Right cardiac atrium (tissue), 5 donors: ENCODE measurements at regions of chr3 and their contacts with region 1.

Region 1: GRCh38 chr3:113136071-113136470 is 75.3 kb upstream of the BOC start:
- DNase-seq: no peak
- ATAC-seq: no peak
- H3K4me3 ChIP-seq: no peak overlapping the region
- H3K27ac ChIP-seq: no peak overlapping the region
- H3K4me1 ChIP-seq: no peaks in the 10 kb centered on the region
- H3K27me3 ChIP-seq: no peaks in the 10 kb centered on the region

Region 2: GRCh38 chr3:113211330-113212149 is 75.5 kb after region 1 on chr3 and contains the start of gene BOC:
- intact Hi-C with region 1: loop called in 1 of 4 experiments (anchors 5 kb)
- DNase-seq: peak; percentile 44 to 75 (median 75)
- ATAC-seq: peak; percentile 83 to 89
- H3K4me3 ChIP-seq: peak within 1 kb of the TSS; percentile 66
- H3K27ac ChIP-seq: peak within 1 kb of the TSS; percentile 53
- H3K4me1 ChIP-seq: no peaks in the 10 kb centered on the region
- H3K27me3 ChIP-seq: no peaks in the 10 kb centered on the region
- total RNA-seq, gene BOC: 12.9 to 45.3 (median 15.4) TPM

Region 3: DNA sequence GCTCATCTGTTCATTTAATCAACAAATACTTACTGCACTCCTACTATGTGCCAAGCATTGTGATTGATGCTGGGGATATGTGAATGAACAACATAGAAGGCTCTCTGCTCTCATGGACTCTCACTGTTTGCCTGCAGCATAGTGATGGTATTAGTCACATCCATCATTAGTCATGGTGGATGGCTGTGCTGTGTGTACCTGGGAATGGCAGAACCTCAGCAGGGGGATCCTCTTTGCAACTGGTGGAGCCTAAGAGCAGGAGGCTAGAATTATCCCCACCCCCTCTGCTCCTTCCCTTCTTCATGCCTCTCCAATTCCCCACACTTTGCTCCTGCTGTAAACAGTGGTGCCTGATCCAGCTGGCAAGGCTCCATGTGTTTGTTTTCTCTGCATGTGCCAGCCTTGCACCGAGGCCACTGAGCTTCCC is 95.8 kb after region 1 on chr3:
- intact Hi-C with region 1: no loop called
- DNase-seq: no peak
- ATAC-seq: peak; percentile 45 to 56
- H3K4me3 ChIP-seq: no peak overlapping the region
- H3K27ac ChIP-seq: no peak overlapping the region
- H3K4me1 ChIP-seq: peaks cover 5% of the 10 kb centered on the region
- H3K27me3 ChIP-seq: no peaks in the 10 kb centered on the region

Region 4: DNA sequence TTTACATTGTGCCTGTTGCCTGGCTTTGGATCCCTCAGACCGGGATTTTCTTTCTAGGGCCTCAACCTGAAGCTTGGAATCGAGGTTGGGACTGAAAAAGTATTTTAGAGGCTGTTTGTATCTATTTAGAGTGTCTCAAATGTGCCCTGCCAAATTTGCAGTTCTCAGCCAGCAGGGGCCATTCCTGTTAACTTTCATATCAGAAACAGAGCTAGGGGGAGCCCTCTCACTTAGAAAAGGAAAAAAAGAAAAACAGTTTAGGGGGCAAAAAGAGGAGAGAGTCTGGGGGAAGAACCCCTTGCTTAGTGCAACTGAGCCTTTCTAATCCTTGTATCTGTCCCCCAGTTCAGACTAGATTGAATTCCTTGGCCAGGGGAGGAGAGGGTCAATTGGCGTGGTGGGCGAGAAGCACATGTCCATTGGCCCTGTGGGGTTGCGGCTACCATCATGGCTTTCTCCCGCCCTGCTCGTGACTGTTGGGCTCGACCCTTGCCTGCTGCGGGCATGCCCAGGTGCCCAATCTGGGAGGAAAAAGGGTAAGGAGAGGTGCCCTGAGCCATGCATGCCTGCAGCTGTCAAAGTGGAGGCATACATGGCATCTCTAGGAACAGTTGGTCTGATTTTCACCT is 203.7 kb after region 1 on chr3:
- intact Hi-C with region 1: no loop called
- DNase-seq: no peak
- ATAC-seq: peak in 1 of 2 donors; percentile 16
- H3K4me3 ChIP-seq: no peak overlapping the region
- H3K27ac ChIP-seq: no peak overlapping the region
- H3K4me1 ChIP-seq: no peaks in the 10 kb centered on the region
- H3K27me3 ChIP-seq: no peaks in the 10 kb centered on the region